ENCODE measurements at regions of chr5 and their contacts with region 1.

Region 1: DNA sequence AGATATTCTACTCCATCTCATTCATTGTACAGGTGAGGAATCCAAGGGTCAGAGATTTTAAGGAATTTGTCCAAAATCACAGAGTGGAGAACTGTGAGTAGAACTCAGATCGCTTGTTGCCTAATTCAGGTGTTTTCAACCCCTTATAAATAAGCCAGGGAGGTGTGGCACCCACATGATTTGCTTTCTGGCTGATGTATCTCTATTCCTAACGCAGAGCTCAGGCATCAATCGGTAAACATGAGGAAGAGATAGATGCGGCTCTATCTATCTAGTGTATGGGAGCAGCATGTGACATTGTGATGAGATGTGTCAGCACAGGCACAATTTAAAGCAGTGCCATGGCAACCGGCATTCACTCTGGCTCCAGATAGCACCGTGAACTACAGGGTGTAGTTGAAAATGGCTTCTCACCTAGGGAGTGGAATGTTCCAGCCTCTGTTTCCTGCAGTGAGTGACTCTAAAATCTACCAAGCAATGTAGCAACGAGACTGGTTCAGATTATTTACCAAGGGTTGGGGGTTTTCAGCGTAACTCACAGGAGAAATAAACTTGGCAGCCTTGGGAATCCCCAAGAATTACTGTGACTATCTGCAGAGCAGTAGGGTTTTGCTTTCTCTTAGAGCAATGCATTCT is 53.4 kb upstream of the SUB1 start:
- DNase-seq: peak; percentile 73
- H3K4me3 Mint-ChIP-seq: peak overlapping the region; percentile 77
- H3K27ac Mint-ChIP-seq: peak overlapping the region; percentile 86
- H3K4me1 Mint-ChIP-seq: peaks cover 69% of the 10 kb centered on the region
- H3K27me3 Mint-ChIP-seq: no peaks in the 10 kb centered on the region

Region 2: GRCh38 chr5:32542216-32543059 is 10.4 kb after region 1 on chr5:
- CTCF ChIA-PET with region 1: interaction called, 5 read pairs
- POLR2A ChIA-PET with region 1: interaction called, 17 read pairs
- DNase-seq: peak; percentile 68
- H3K4me3 Mint-ChIP-seq: peak overlapping the region; percentile 4
- H3K27ac Mint-ChIP-seq: peak overlapping the region; percentile 97
- H3K4me1 Mint-ChIP-seq: peaks cover 56% of the 10 kb centered on the region
- H3K27me3 Mint-ChIP-seq: no peaks in the 10 kb centered on the region

Region 3: DNA sequence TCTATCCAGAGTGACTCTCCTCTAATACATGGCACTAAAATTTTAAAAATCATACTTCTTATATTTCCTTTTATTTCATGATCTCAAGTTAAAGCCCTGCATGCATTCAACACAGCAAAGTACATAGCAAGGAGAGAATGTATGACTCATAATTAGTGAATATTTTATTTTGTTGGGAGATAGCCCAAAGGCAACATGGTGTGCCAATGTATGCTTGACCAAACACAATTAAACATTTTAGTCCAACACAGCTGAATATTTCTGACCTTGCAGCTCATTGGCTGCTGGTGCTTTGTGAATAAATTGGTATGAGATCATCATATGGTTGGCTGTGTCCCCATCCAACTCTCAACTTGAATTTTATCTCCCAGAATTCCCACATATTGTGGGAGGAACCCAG is 282.6 kb after region 1 on chr5:
- CTCF ChIA-PET with region 1: no interaction called
- POLR2A ChIA-PET with region 1: no interaction called
- DNase-seq: no peak
- H3K4me3 Mint-ChIP-seq: no peak overlapping the region
- H3K27ac Mint-ChIP-seq: no peak overlapping the region
- H3K4me1 Mint-ChIP-seq: no peaks in the 10 kb centered on the region
- H3K27me3 Mint-ChIP-seq: no peaks in the 10 kb centered on the region

Region 4: GRCh38 chr5:32928761-32929160 is 396.8 kb after region 1 on chr5:
- CTCF ChIA-PET with region 1: no interaction called
- POLR2A ChIA-PET with region 1: no interaction called
- DNase-seq: no peak
- H3K4me3 Mint-ChIP-seq: no peak overlapping the region
- H3K27ac Mint-ChIP-seq: no peak overlapping the region
- H3K4me1 Mint-ChIP-seq: no peaks in the 10 kb centered on the region
- H3K27me3 Mint-ChIP-seq: no peaks in the 10 kb centered on the region